Activated CD4-positive, alpha-beta T cell treated with anti-CD3 and anti-CD28 coated beads, Interleukin-2, amount 10 ng/mL, durations not matched to agents 24 days and 14 days (primary cell): ENCODE measurements at regions of chr12 and their contacts with region 1.

Region 1: DNA sequence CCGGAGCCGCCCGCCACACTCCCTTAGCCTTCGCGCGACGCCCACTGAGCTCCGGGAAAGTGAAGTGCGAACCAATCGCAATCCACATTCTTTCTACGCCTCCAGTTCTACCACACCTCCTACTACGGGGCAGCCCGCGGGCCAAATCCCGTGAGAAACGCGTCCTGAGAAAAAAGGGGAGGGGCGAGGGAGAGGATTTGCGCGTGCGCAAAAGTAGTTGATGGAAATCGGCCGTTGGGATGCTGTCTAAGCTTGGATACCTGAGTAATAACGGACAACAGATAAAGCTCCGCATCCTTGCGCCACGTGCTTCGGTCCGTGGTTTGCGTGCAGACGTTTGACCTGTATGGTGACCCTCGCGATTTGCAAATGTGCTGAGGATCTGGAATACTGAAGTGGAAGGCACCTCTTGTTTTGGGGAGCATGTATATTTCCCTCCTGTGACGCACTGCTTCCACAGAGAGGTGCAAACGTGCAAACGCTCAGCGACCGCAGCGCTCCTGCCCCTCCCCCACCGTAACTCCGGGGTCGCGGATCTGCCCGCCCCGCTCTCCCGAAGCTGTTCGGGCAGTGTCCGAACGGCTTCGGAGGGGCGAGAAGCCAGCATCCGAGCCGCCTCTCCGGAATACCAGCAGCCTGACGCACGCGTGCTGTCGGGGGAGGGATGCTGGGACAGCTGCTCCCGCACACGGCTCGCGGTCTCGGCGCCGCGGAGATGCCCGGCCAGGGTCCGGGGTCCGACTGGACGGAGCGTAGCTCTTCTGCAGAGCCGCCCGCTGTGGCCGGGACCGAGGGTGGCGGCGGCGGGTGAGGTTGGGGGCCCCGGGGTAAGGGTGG is at the starts of genes FAM216A and GPN3:
- DNase-seq: peak; percentile 99
- H3K4me3 Mint-ChIP-seq: peak within 1 kb of the TSS; percentile 89
- H3K27ac Mint-ChIP-seq: peak within 1 kb of the TSS; percentile 95
- H3K4me1 Mint-ChIP-seq: peaks cover 32% of the 10 kb centered on the region
- H3K27me3 Mint-ChIP-seq: no peaks in the 10 kb centered on the region
- total RNA-seq, gene FAM216A: 53.7 and 54.4 TPM in 2 replicates
- total RNA-seq, gene GPN3: 60.0 and 62.8 TPM in 2 replicates

Region 2: GRCh38 chr12:110583137-110584059 is 115.0 kb after region 1 on chr12 and contains the start of gene PPTC7:
- intact Hi-C with region 1: loop called (anchors 1 kb)
- DNase-seq: peak; percentile 98
- H3K4me3 Mint-ChIP-seq: peak within 1 kb of the TSS; percentile 98
- H3K27ac Mint-ChIP-seq: peak within 1 kb of the TSS; percentile 97
- H3K4me1 Mint-ChIP-seq: peaks cover 58% of the 10 kb centered on the region
- H3K27me3 Mint-ChIP-seq: no peaks in the 10 kb centered on the region
- total RNA-seq, gene PPTC7: 57.9 and 58.4 TPM in 2 replicates